Stomach (tissue), 19 donors: ENCODE measurements at regions of chr10 and their contacts with region 1.

Region 1: GRCh38 chr10:128018236-128018635 is 108.0 kb downstream of the MKI67 start:
- DNase-seq: peak in 1 of 2 donors; percentile 83
- H3K4me3 ChIP-seq: no peak overlapping the region
- H3K27ac ChIP-seq: no peak overlapping the region
- H3K4me1 ChIP-seq: no peaks in the 10 kb centered on the region
- H3K27me3 ChIP-seq: peaks cover 0 to 8% (median 0%) of the 10 kb centered on the region in 3 donors
- CTCF ChIP-seq: no peak
- EP300 ChIP-seq: no peak
- POLR2A ChIP-seq: no peak

Region 2: GRCh38 chr10:127702271-127702670 is 316.0 kb before region 1 on chr10:
- intact Hi-C with region 1: no loop called
- DNase-seq: no peak
- H3K4me3 ChIP-seq: no peak overlapping the region
- H3K27ac ChIP-seq: no peak overlapping the region
- H3K4me1 ChIP-seq: no peaks in the 10 kb centered on the region
- H3K27me3 ChIP-seq: peaks cover 0 to 19% (median 0%) of the 10 kb centered on the region in 3 donors
- CTCF ChIP-seq: no peak
- EP300 ChIP-seq: no peak
- POLR2A ChIP-seq: no peak

Region 3: GRCh38 chr10:128069351-128070051 is 51.3 kb after region 1 on chr10:
- intact Hi-C with region 1: loop called (anchors 5 kb)
- DNase-seq: peak; percentile 72 to 93
- H3K4me3 ChIP-seq: no peak overlapping the region
- H3K27ac ChIP-seq: no peak overlapping the region
- H3K4me1 ChIP-seq: peaks cover 0 to 18% (median 6%) of the 10 kb centered on the region in 4 donors
- H3K27me3 ChIP-seq: no peaks in the 10 kb centered on the region
- CTCF ChIP-seq: peak in 5 of 7 experiments; percentile 57 to 89 (median 77)
- EP300 ChIP-seq: no peak
- POLR2A ChIP-seq: no peak